Gastrocnemius medialis (tissue), 4 donors: ENCODE measurements at regions of chr19 and their contacts with region 1.

Region 1: DNA sequence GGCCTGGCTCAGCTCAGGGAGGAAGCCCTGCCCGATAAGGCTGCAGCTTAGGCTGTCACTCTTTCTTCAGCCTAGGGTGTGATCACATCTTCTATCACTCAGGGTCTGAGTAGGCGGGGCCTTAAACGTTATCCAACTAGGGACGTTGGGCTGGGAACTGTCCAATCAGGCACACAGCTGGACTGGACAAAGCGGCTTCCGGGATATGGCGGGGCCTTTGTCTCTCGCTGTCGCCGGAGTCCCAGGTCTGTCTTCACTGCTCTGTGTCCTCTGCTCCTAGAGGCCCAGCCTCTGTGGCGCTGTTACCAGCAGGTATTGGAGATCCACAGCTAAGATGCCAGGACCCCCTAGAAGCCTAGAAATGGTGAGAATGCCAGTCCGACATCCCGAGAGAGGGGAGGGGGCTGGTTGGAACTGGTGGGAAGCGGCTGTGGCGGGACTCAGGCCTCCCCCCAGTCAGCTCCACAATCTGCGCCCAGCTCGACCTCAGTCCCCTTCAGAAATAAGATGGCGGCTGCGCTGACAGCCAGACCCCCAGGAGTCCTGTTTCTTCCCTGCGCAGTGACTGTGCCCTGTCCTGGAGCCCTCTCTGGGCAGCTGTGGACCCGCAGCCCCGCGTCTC is at the start of gene ZNF254:
- DNase-seq: peak; percentile 85 to 89
- ATAC-seq: peak; percentile 100
- H3K4me3 ChIP-seq: peak within 1 kb of the TSS; percentile 64 to 77 (median 74)
- H3K27ac ChIP-seq: peak within 1 kb of the TSS; percentile 74 to 85 (median 84)
- H3K4me1 ChIP-seq: no peaks in the 10 kb centered on the region
- H3K27me3 ChIP-seq: no peaks in the 10 kb centered on the region
- CTCF ChIP-seq: no peak
- POLR2A ChIP-seq: peak; percentile 42 to 72
- total RNA-seq, gene ZNF254: 2.8 to 5.6 (median 4.1) TPM

Region 2: DNA sequence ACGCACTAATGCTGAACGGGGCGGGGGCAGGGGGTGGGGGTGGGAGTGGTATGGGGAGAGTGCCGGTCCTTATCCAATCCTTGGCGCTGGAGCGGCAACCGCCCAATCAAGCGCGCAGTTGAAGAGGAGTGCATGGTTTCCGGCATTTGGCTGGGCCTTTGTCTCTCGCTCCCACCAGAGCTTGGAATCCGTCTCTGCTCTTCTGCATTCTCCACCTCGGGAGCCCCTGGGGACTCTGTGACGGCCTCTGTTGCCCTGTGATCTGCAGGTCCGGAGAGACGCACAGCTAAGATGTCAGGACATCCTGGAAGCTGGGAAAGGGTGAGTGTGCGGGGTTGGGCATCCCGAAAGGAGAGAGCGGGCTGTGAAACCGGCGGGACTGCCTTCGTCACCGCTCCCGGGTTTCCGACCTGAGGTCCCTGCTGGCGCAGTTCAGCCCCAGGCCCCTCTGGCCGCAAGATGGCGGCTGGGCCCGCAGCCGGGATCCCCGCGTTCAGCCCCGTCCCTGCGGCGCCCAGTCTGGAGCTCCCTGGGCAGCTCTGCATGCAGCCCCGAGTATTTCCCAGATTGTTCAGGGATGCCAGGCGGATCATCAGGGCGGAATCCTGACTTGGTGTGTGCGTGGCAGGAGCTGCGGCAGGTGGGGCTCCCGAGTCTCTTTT is 53.7 kb before region 1 on chr19:
- in situ Hi-C with region 1: no loop called
- intact Hi-C with region 1: loop called (anchors 2 kb)
- DNase-seq: peak; percentile 71 to 82
- ATAC-seq: peak; percentile 92 to 94
- H3K4me3 ChIP-seq: peak overlapping the region; percentile 79 to 89 (median 82)
- H3K27ac ChIP-seq: peak overlapping the region; percentile 80 to 89 (median 84)
- H3K4me1 ChIP-seq: peaks cover 2 to 14% of the 10 kb centered on the region in 2 donors
- H3K27me3 ChIP-seq: no peaks in the 10 kb centered on the region
- CTCF ChIP-seq: no peak
- POLR2A ChIP-seq: peak; percentile 33 to 50